Endothelial cell of umbilical vein (primary cell): ENCODE measurements at regions of chr15 and their contacts with region 1.

Region 1: DNA sequence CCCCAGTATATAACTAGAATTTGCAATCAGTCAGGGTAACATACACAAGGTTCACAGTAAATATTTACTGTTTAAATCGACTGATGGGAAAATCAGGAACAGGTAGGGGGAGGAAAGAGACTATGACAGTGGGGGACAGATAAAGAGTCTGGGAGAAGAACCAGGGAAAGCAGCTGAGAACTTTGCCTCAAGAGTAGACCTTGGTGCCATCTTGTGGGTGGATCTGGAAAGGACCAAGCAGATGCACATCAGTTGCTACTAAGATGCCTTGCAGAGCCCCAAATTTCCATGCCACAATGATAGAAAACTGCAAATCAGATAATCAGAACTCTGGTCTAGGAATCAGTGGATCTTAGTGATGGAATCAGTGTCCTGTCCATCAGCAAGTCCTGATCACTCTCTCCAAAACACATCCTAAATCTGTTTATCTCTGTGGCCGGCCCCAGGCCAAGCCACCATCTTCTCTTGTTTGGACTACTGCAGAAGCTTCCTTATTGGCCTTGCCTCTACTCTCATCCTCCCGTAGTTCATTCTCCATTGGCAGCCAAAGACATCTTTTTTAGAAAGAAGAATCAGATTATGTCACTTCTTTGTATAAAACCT is 62.7 kb downstream of the PDE8A start:
- DNase-seq: peak; percentile 80
- H3K4me3 ChIP-seq: no peak overlapping the region
- H3K27ac ChIP-seq: no peak overlapping the region
- H3K4me1 ChIP-seq: peaks cover 38% of the 10 kb centered on the region
- H3K27me3 ChIP-seq: no peaks in the 10 kb centered on the region
- CTCF ChIP-seq: peak; percentile 45 to 59
- POLR2A ChIP-seq: no peak

Region 2: GRCh38 chr15:84588053-84588874 is 456.1 kb before region 1 on chr15:
- CTCF ChIA-PET with region 1: interaction called, 7 read pairs
- POLR2A ChIA-PET with region 1: no interaction called
- dilution Hi-C with region 1: no loop called
- intact Hi-C with region 1: loop called (anchors 1 kb)
- DNase-seq: peak; percentile 72
- H3K4me3 ChIP-seq: peak overlapping the region in 2 of 3 experiments; percentile 24 to 58
- H3K27ac ChIP-seq: no peak overlapping the region
- H3K4me1 ChIP-seq: peaks cover 5% of the 10 kb centered on the region
- H3K27me3 ChIP-seq: peaks cover 0 to 4% of the 10 kb centered on the region in 2 experiments
- CTCF ChIP-seq: peak; percentile 43 to 82
- POLR2A ChIP-seq: no peak

Region 3: GRCh38 chr15:84818261-84819131 is 225.9 kb before region 1 on chr15:
- CTCF ChIA-PET with region 1: interaction called, 5 read pairs
- POLR2A ChIA-PET with region 1: no interaction called
- dilution Hi-C with region 1: no loop called
- intact Hi-C with region 1: loop called (anchors 1 kb)
- DNase-seq: peak; percentile 91
- H3K4me3 ChIP-seq: peak overlapping the region in 2 of 3 experiments; percentile 57 to 58
- H3K27ac ChIP-seq: peak overlapping the region; percentile 88
- H3K4me1 ChIP-seq: peaks cover 42% of the 10 kb centered on the region
- H3K27me3 ChIP-seq: no peaks in the 10 kb centered on the region
- CTCF ChIP-seq: peak in 1 of 2 donors; percentile 2
- POLR2A ChIP-seq: peak; percentile 71

Region 4: DNA sequence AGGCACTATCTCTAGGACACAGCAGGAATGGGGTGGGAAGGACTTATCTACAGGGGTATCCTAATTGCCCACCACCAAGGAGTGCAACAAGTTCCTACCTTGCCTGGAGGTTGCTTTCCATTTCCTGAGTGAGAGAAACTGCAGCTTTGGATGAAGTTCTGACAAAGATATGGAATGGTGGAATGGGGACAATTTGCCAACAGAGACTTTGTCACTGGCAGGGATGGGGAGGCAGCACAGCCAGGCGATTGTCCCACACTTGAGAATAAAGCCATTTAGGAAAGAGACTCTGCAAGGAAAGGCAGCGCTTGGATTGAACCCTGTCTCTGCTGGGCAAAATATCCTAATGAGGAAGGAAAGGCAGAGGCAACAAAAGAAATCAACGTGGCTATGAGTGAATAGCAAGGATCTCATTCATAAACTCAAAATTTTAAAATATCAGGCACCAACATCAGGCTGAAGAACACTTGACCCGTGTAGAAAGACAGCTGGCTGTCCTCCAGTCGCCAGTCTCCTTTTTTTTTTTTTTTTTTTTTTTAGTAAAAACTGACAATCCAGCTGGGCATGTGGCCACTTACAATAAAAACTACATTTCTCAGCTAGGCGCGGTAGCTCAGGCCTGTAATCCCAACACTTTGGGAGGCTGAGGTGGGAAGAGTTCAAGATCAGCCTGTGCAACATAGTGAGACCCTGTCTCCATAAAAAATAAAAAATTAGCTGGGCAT is 94.3 kb before region 1 on chr15:
- CTCF ChIA-PET with region 1: interaction called, 92 read pairs
- POLR2A ChIA-PET with region 1: no interaction called
- dilution Hi-C with region 1: no loop called
- intact Hi-C with region 1: loop called (anchors 1 kb)
- DNase-seq: no peak
- H3K4me3 ChIP-seq: no peak overlapping the region
- H3K27ac ChIP-seq: no peak overlapping the region
- H3K4me1 ChIP-seq: peaks cover 15% of the 10 kb centered on the region
- H3K27me3 ChIP-seq: no peaks in the 10 kb centered on the region
- CTCF ChIP-seq: no peak
- POLR2A ChIP-seq: no peak

Region 5: GRCh38 chr15:84960391-84961113 is 83.8 kb before region 1 on chr15:
- CTCF ChIA-PET with region 1: interaction called, 92 read pairs
- POLR2A ChIA-PET with region 1: no interaction called
- dilution Hi-C with region 1: no loop called
- intact Hi-C with region 1: loop called (anchors 1 kb)
- DNase-seq: no peak
- H3K4me3 ChIP-seq: no peak overlapping the region
- H3K27ac ChIP-seq: no peak overlapping the region
- H3K4me1 ChIP-seq: peaks cover 21% of the 10 kb centered on the region
- H3K27me3 ChIP-seq: no peaks in the 10 kb centered on the region
- CTCF ChIP-seq: no peak
- POLR2A ChIP-seq: no peak

Region 6: DNA sequence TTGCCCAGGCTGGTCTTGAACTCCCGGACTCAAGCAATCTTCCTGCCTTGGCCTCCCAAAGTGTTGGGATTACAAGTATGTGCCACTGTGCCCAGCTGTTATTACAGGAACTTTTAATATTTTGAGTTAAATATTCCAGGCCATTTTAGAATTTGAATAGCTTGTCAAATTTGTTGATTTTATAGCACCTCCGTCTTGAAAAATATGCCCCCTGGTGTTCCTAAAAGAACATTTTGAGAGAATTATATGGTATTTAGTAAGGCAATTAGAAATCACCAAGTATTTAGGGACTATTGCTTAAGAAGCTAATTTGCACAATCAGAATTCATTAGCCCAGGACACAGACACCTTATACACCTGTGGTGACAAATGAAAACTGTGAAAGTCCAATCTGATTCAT is 39.0 kb before region 1 on chr15:
- CTCF ChIA-PET with region 1: interaction called, 15 read pairs
- POLR2A ChIA-PET with region 1: no interaction called
- dilution Hi-C with region 1: no loop called
- intact Hi-C with region 1: no loop called
- DNase-seq: no peak
- H3K4me3 ChIP-seq: no peak overlapping the region
- H3K27ac ChIP-seq: no peak overlapping the region
- H3K4me1 ChIP-seq: peaks cover 11% of the 10 kb centered on the region
- H3K27me3 ChIP-seq: no peaks in the 10 kb centered on the region
- CTCF ChIP-seq: peak in 1 of 2 donors; percentile 4
- POLR2A ChIP-seq: no peak

Region 7: DNA sequence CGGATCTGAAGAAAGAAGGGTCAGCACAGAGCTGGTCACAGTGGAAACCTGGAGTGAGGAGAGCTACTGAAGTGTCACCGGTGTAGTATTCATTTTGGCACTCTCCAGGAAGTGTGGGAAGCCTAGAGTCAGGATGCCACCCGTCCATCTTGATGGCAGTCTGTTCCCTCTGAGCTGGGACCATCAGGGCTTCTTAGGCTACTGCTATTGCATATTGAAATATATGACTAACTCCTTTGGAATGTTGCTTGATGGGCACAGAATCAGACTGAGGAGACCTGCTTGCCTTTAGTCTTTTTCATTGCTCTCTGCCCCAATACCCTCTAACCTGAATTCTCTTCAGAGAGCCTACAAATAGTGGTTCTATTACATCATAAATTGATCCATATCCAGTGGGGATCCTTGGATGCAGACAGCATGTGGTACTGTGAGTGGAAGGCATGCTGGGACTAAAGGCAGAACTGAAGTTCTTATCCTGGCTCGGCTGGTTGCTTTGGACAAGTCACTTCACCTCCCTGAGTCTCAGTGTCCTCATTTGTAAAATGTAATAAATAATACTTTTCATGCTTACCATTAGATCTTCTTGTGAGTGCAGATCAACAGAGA is 80.8 kb after region 1 on chr15:
- CTCF ChIA-PET with region 1: no interaction called
- POLR2A ChIA-PET with region 1: no interaction called
- dilution Hi-C with region 1: no loop called
- intact Hi-C with region 1: loop called (anchors 5 kb)
- DNase-seq: peak; percentile 52
- H3K4me3 ChIP-seq: no peak overlapping the region
- H3K27ac ChIP-seq: no peak overlapping the region
- H3K4me1 ChIP-seq: peaks cover 30% of the 10 kb centered on the region
- H3K27me3 ChIP-seq: no peaks in the 10 kb centered on the region
- CTCF ChIP-seq: no peak
- POLR2A ChIP-seq: no peak

Region 8: DNA sequence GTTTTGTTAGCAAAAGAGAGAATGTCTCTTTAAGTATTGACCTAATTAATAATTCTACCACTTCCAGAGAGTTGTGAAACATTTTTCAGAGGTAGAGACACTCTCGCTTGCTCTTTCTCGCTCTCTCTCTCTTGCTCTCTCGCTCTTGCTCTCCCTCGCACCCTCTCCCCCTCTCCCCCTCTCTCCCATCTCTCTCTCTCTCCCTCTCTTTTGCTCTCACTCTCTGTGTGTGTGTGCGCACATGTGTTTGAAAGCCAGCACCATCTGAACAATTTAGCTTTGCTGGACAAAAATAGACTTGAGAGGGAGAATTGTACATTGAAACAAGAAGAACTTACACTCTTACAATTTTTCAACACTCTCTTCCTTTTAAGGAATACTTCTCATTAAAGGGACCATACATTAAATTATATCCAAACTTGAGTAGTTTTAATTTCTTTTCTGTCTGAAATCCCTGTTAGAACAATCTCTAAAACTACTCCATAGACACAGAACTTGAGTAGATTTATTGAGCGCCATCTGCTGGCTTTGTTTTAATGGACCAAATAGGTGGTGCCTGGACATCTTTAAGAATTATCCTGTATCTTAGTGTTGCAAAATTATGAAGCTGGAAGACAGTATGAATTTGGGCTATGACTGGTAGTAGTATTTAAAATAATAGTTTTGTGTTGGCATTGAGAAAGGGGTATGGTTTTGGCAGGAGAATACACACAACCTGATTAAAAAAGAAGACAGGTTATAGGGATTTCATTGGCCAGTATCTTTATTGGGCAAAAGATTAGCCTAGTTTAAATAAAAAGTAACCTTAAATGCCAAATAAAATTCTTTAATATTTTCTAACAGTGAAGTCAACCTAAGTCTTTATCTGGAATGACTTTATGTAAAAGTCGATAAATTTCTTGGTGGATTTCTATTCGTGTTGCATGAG is 460.7 kb after region 1 on chr15:
- CTCF ChIA-PET with region 1: no interaction called
- POLR2A ChIA-PET with region 1: no interaction called
- dilution Hi-C with region 1: no loop called
- intact Hi-C with region 1: no loop called
- DNase-seq: peak; percentile 64
- H3K4me3 ChIP-seq: no peak overlapping the region
- H3K27ac ChIP-seq: no peak overlapping the region
- H3K4me1 ChIP-seq: peaks cover 11% of the 10 kb centered on the region
- H3K27me3 ChIP-seq: no peaks in the 10 kb centered on the region
- CTCF ChIP-seq: peak; percentile 34 to 41
- POLR2A ChIP-seq: no peak